ENCODE measurements at regions of chr4 and their contacts with region 1.

Region 1: GRCh38 chr4:6732441-6733357 is 16.7 kb downstream of the BLOC1S4 start:
- DNase-seq: peak; percentile 84 to 89
- H3K4me3 ChIP-seq: peak overlapping the region; percentile 44; the same call in 1 of the 2 replicates
- H3K27ac ChIP-seq: peak overlapping the region; percentile 100
- H3K4me1 ChIP-seq: peaks cover 25% of the 10 kb centered on the region
- H3K27me3 ChIP-seq: no peaks in the 10 kb centered on the region
- CTCF ChIP-seq: no peak

Region 2: DNA sequence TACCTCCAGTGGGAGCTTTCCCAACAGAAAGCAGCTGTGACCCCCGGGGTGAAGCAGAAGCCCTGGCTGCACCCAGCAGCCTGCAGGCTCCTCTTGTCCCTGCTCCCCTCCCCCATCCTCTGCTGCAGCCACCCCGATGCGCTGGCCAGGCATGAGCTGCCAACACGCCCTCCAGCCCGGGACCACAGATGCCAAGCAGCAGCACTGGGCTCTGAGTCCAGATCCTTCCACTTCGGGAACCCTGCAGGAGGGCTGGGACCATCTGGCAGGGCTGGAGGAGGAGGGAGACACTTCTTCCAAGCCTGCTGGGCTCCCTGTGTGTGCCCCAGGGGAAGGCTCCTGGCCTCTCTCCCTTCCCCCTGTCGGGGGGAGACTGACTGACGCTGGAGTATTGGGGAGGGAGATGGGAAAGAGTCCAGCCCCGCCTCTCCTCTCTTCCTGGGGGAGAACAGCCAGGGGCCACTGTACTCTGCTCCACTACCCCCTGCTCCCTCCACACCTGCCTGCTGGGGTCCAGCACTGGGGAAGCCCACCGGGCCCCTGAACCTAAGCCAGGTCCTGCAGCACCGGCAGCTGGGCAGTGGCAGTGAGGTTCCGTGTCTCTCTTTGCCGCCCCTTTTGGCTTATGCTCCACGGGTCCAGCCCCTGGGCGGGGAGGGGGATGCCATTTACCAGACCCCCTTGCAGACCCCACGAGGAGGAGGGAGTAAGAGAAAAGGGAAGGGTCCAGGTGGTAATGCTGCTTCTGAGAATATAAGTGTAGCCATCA is 316.0 kb before region 1 on chr4:
- CTCF ChIA-PET with region 1: no interaction called
- POLR2A ChIA-PET with region 1: no interaction called
- intact Hi-C with region 1: no loop called
- DNase-seq: no peak
- H3K4me3 ChIP-seq: no peak overlapping the region
- H3K27ac ChIP-seq: no peak overlapping the region
- H3K4me1 ChIP-seq: no peaks in the 10 kb centered on the region
- H3K27me3 ChIP-seq: no peaks in the 10 kb centered on the region
- CTCF ChIP-seq: no peak

Region 3: GRCh38 chr4:6749341-6750171 is 16.9 kb after region 1 on chr4:
- CTCF ChIA-PET with region 1: interaction called, 5 read pairs
- POLR2A ChIA-PET with region 1: interaction called, 6 read pairs
- intact Hi-C with region 1: loop called (anchors 1 kb)
- DNase-seq: peak; percentile 91 to 93
- H3K4me3 ChIP-seq: peak overlapping the region; percentile 35; the same call in 1 of the 2 replicates
- H3K27ac ChIP-seq: peak overlapping the region; percentile 96
- H3K4me1 ChIP-seq: peaks cover 78% of the 10 kb centered on the region
- H3K27me3 ChIP-seq: no peaks in the 10 kb centered on the region
- CTCF ChIP-seq: no peak

Region 4: DNA sequence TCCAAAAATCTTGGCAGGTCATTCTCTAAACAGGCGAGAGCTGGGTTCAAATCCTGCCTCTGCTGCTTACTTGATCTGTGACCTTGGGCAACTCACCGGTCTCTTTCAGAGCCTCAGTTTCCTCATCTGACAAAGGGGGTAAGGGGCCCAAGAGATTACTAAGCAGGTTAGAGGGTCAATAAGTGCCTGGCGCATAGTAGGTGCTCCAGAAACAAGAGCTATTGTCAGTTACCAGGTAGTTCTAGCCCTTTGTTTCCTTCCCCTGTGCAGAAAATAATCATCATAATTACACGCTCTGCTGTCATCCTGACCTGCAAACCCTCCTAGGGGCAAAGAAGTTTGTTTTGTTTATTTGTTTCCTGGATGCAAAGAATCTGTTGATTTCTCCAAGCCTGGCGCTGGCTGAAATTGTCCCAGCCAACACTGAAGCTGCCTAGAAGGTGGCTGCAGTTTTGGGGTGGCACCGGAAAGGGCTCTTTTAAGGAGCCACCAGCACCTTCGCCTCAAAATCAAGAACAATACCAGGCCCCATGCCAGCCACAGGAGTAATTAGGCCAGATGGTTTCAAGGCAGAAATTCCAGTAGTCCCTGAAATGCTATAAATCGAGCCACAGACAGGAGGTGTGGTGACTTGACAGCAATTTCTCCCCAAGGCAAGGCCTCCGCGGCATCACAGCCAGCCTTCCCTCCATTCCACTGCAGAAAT is 39.7 kb after region 1 on chr4:
- CTCF ChIA-PET with region 1: no interaction called
- POLR2A ChIA-PET with region 1: interaction called, 11 read pairs
- intact Hi-C with region 1: no loop called
- DNase-seq: peak; percentile 77 to 89
- H3K4me3 ChIP-seq: no peak overlapping the region
- H3K27ac ChIP-seq: peak overlapping the region; percentile 81
- H3K4me1 ChIP-seq: peaks cover 71% of the 10 kb centered on the region
- H3K27me3 ChIP-seq: no peaks in the 10 kb centered on the region
- CTCF ChIP-seq: no peak

Region 5: GRCh38 chr4:6802025-6802424 is 69.3 kb after region 1 on chr4:
- CTCF ChIA-PET with region 1: interaction called, 4 read pairs
- POLR2A ChIA-PET with region 1: interaction called, 21 read pairs
- intact Hi-C with region 1: no loop called
- DNase-seq: no peak
- H3K4me3 ChIP-seq: no peak overlapping the region
- H3K27ac ChIP-seq: no peak overlapping the region
- H3K4me1 ChIP-seq: peaks cover 19% of the 10 kb centered on the region
- H3K27me3 ChIP-seq: no peaks in the 10 kb centered on the region
- CTCF ChIP-seq: no peak

Measured in PC-9 (cell line).